Activated CD4-positive, alpha-beta memory T cell treated with anti-CD3 and anti-CD28 coated beads for 36 hours (primary cell): ENCODE measurements at regions of chr3 and their contacts with region 1.

Region 1: DNA sequence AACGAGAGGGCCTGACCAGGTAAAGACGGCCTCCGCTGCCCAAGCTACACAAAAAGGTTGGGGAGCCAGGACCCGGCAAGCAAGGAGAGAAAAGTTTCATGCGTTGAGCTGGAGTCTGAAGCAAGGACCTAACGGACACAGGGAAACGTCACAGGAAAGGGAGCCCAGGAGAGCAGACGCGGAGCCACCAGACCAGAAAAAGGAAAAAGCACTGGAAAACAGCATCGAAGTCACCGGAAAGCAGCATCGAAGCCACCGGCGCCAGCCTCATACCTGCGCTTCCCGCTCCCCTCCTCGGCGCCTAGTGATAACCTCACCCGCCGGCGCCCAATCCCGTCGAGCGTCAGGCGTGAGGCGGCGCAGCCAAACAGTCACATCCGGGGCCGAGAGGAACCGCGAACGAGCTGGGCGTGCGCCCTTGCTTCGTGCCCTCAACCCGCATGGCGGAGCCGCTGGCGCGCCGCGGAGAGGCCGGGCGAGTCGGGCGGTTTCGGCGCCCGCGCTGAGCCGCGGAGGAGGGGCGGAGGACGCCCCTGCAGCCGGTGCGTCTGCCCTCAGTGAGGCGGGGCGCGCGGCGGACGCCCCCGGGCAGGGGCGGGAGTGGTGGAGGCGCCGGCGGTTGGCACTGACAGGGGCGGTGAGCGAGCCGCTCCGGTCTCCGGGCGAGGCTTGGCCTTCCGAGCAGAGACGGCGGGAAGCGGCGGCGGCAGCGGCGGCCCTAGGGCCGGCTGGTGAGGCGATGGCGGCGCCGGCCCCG is at the starts of genes FBXO45 and WDR53:
- DNase-seq: peak; percentile 97
- H3K4me3 Mint-ChIP-seq: peak within 1 kb of the TSS; percentile 97
- H3K27ac Mint-ChIP-seq: peak within 1 kb of the TSS; percentile 90
- H3K4me1 Mint-ChIP-seq: peaks cover 46% of the 10 kb centered on the region
- H3K27me3 Mint-ChIP-seq: no peaks in the 10 kb centered on the region
- total RNA-seq, gene FBXO45: 16.3 to 17.2 TPM
- total RNA-seq, gene WDR53: 20.9 to 24.1 TPM

Region 2: DNA sequence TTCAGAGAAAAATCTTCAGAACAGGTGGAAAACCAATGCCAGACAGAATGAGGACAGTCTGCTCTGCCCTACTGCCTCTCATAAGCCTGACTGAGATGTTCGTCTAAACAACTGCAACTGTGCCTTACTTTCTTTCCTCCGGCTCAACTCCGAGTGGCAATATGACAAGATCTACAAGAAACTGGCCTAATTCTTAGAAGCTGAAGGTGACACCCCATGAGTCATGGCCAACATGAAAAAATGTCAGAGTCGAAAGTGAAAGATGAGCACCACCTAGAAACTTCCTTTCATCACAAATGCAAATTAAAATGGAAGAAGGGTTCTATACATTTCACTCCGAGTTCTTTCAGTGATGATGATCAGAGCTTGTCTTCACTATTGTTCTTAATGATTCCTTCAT is 293.8 kb before region 1 on chr3:
- CTCF ChIA-PET with region 1: no interaction called
- POLR2A ChIA-PET with region 1: no interaction called
- intact Hi-C with region 1: loop called (anchors 5 kb)
- DNase-seq: peak; percentile 81
- H3K4me3 Mint-ChIP-seq: peak overlapping the region; percentile 53
- H3K27ac Mint-ChIP-seq: peak overlapping the region; percentile 90
- H3K4me1 Mint-ChIP-seq: peaks cover 67% of the 10 kb centered on the region
- H3K27me3 Mint-ChIP-seq: no peaks in the 10 kb centered on the region

Region 3: GRCh38 chr3:196502775-196503195 is 65.6 kb before region 1 on chr3:
- CTCF ChIA-PET with region 1: interaction called, 3 read pairs
- POLR2A ChIA-PET with region 1: interaction called, 5 read pairs
- intact Hi-C with region 1: loop called (anchors 1 kb)
- DNase-seq: peak; percentile 81
- H3K4me3 Mint-ChIP-seq: peak overlapping the region; percentile 97
- H3K27ac Mint-ChIP-seq: peak overlapping the region; percentile 99
- H3K4me1 Mint-ChIP-seq: peaks cover 36% of the 10 kb centered on the region
- H3K27me3 Mint-ChIP-seq: no peaks in the 10 kb centered on the region

Region 4: DNA sequence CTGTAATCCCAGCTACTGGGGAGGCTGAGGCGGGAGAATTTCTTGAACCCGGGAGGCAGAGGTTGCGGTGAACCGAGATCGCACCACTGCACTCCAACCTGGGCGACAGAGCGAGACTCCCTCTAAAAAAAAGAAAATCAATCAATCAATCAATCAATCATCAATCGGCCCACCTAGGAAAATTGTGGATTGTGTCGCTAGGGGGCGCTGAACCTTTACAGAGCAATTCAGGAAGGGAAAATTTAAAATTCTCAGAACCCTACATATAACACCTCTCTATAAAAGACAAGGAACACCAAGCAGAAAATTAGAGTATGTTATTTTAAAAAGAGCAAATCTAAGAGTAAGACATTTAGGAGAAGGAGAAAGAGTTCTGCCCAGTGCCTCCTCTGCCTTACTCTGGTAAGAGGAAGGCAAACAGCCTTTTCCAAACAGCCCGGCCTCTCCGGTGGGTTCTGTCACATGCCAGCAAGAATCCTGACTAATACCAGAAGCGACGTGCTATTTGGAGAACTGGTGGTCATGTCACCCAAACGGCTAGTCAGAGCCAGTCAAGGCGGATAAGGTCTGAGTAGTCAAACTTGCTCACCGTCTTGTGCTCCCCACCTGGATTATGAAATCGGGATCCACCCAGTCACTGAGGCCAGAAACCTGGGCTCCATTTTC is 31.0 kb before region 1 on chr3:
- CTCF ChIA-PET with region 1: interaction called, 7 read pairs
- POLR2A ChIA-PET with region 1: interaction called, 4 read pairs
- intact Hi-C with region 1: loop called (anchors 1 kb)
- DNase-seq: peak; percentile 77
- H3K4me3 Mint-ChIP-seq: no peak overlapping the region
- H3K27ac Mint-ChIP-seq: no peak overlapping the region
- H3K4me1 Mint-ChIP-seq: peaks cover 2% of the 10 kb centered on the region
- H3K27me3 Mint-ChIP-seq: peaks cover 3% of the 10 kb centered on the region

Region 5: GRCh38 chr3:196639483-196640296 is 71.3 kb after region 1 on chr3 and contains the start of gene NRROS:
- CTCF ChIA-PET with region 1: no interaction called
- POLR2A ChIA-PET with region 1: interaction called, 4 read pairs
- intact Hi-C with region 1: loop called (anchors 2 kb)
- DNase-seq: peak; percentile 86
- H3K4me3 Mint-ChIP-seq: peak within 1 kb of the TSS; percentile 88
- H3K27ac Mint-ChIP-seq: peak within 1 kb of the TSS; percentile 94
- H3K4me1 Mint-ChIP-seq: peaks cover 64% of the 10 kb centered on the region
- H3K27me3 Mint-ChIP-seq: no peaks in the 10 kb centered on the region
- total RNA-seq, gene NRROS: 24.5 to 25.3 TPM

Region 6: DNA sequence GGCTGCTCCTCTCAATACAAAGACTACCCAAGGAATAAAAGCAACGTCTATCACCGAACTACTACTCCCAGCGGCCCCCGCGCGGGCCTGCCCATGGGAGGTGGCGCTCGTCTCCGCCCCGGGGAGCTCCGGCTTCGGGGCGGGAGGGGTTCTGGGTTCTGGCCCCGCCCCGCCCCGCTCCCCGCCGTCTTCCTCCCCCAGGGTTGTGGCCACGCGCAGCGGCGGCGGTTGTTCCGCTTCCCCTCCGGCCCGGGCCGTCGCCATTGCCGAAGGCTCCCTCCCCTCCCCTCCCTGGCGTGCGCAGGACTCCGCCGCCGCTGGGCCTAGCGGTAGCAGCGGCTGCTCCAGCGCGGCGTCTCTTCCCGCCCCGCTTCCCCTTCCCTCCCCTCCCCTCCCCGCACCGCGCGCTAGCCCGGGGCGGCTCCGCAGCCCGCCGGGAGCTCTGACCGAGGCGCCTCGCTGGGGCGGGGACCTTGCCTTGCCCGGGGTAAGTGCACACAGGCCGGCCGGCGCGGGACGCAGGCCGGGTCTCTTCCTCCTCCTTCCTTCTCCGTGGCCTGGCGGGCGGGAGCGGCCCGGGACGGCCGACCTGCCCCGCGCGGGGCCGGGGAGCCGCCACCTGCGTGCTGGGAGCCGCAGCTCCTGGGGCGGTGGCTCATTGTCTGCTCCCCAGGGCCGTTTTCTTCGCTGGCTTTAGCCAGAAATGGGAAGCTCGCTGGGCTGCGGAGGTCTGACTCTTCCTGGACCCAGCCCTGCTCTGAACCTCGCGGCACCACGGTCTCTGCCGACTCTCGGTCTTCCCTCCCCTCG is 171.5 kb after region 1 on chr3 and contains the start of gene PAK2:
- CTCF ChIA-PET with region 1: no interaction called
- POLR2A ChIA-PET with region 1: interaction called, 3 read pairs
- intact Hi-C with region 1: loop called (anchors 2 kb)
- DNase-seq: peak; percentile 92
- H3K4me3 Mint-ChIP-seq: peak within 1 kb of the TSS; percentile 98
- H3K27ac Mint-ChIP-seq: peak within 1 kb of the TSS; percentile 96
- H3K4me1 Mint-ChIP-seq: peaks cover 28% of the 10 kb centered on the region
- H3K27me3 Mint-ChIP-seq: no peaks in the 10 kb centered on the region
- total RNA-seq, gene PAK2: 98.4 to 101 TPM

Region 7: DNA sequence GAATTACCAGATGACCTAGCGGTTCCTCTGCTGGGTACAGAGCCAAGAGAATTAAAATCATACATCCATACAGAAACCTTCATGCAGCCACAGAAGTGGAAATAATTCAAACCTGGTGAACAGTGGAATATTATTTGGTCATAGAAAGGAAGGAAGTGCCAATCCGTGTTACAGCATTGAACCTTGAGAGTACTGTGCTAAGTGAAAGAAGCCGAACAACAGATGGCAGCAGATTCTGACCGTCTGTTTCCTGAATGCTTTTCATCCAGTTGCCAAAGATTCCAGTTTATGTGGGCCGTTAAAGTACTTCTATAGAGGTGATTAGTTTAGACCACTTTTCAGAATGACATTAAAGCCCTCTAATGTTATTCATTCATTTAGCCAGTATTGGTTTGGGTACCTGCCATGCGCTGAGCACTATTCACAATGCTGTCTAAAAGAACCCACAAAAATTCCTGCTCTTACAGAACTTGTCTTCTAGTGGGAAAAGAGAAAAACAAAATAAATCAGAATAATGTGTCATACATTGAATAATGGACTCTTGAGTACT is 253.5 kb after region 1 on chr3:
- CTCF ChIA-PET with region 1: no interaction called
- POLR2A ChIA-PET with region 1: no interaction called
- intact Hi-C with region 1: no loop called
- DNase-seq: no peak
- H3K4me3 Mint-ChIP-seq: no peak overlapping the region
- H3K27ac Mint-ChIP-seq: no peak overlapping the region
- H3K4me1 Mint-ChIP-seq: no peaks in the 10 kb centered on the region
- H3K27me3 Mint-ChIP-seq: no peaks in the 10 kb centered on the region